GM12878 (cell line): ENCODE measurements at regions of chr17 and their contacts with region 1.

Region 1: DNA sequence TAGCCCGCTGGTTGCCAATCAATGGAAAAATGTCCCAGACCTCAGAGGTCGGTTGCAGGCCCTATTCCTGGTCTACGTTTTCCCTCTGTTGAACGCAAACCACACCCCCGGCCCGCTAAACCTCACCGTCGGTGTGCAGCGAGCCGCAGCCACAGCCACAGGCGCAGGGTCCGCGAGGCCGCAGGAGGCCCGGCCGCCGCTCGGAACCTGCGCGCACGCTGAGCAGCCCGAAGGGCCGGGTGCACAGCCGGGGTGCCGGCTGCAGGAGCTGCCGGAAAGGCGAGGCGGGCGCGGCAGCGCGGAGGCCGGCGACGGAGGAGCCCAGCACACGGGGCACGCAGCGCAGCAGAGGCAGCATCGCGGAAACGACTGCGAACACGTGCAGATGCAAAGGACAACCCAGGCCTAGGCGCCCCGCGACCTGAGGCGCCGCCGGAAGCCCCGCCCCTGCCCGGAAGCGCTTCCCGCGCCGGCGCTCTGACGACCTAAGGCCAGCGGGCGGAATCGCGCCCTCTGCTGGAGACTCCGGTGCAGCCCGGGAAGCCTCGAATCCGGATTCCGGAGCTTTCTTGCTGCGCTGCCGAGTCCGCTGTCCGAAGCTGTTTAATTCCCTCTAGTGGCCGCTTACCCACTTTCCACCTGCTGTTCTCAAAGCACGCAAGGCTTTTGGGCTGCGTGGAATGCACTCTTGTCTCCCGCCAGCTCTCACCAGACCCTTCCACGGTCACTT is at the start of gene C1QBP:
- DNase-seq: peak; percentile 71
- ATAC-seq: peak; percentile 94
- H3K4me3 ChIP-seq: peak within 1 kb of the TSS; percentile 81
- H3K27ac ChIP-seq: peak within 1 kb of the TSS; percentile 82
- H3K4me1 ChIP-seq: peaks cover 9% of the 10 kb centered on the region; the same call in 1 of the 2 replicates
- H3K27me3 ChIP-seq: no peaks in the 10 kb centered on the region
- CTCF ChIP-seq: peak; percentile 93 to 99 (median 99); a peak in 5 of 6 replicates
- EP300 ChIP-seq: no peak
- POLR2A ChIP-seq: peak; percentile 95
- RAD21 ChIP-seq: peak; percentile 66
- polyA plus RNA-seq, gene C1QBP: 124 to 227 TPM

Region 2: DNA sequence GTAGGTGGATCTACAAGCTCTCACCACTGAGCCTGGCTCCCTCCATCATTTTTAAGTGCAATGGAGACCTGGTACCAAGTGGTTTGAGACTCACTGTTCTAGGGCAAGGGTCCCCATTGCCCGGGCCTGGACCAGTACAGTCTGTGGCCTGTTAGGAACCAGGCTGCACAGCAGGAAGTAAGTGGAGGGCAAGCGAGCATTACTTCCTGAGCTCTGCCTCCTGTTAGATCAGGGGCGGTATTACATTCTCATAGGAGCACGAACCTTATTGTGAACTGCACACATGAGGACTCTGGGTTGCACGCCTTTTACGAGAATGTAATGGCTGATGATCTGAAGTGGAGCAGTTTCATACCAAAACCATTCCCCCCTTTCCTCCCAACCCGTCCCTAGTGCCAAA is 240.4 kb before region 1 on chr17:
- CTCF ChIA-PET with region 1: interaction called, 35 read pairs
- POLR2A ChIA-PET with region 1: interaction called, 4 read pairs
- RAD21 ChIA-PET with region 1: interaction called, 3 read pairs
- SMC1A ChIA-PET with region 1: interaction called, 3 read pairs
- in situ Hi-C with region 1: no loop called
- intact Hi-C with region 1: loop called (anchors 5 kb)
- DNase-seq: no peak
- ATAC-seq: peak; percentile 69
- H3K4me3 ChIP-seq: no peak overlapping the region
- H3K27ac ChIP-seq: peak overlapping the region; percentile 89
- H3K4me1 ChIP-seq: peaks cover 31% of the 10 kb centered on the region
- H3K27me3 ChIP-seq: no peaks in the 10 kb centered on the region
- CTCF ChIP-seq: no peak; a peak in 1 of 6 replicates
- EP300 ChIP-seq: no peak
- POLR2A ChIP-seq: peak; percentile 27; the same call in 1 of the 2 replicates
- RAD21 ChIP-seq: no peak

Region 3: GRCh38 chr17:5297245-5297644 is 141.6 kb before region 1 on chr17:
- CTCF ChIA-PET with region 1: interaction called, 6 read pairs
- POLR2A ChIA-PET with region 1: interaction called, 4 read pairs
- RAD21 ChIA-PET with region 1: interaction called, 17 read pairs
- SMC1A ChIA-PET with region 1: no interaction called
- in situ Hi-C with region 1: no loop called
- intact Hi-C with region 1: no loop called
- DNase-seq: no peak
- ATAC-seq: peak; percentile 42
- H3K4me3 ChIP-seq: no peak overlapping the region
- H3K27ac ChIP-seq: no peak overlapping the region
- H3K4me1 ChIP-seq: peaks cover 16% of the 10 kb centered on the region
- H3K27me3 ChIP-seq: no peaks in the 10 kb centered on the region
- CTCF ChIP-seq: peak; percentile 9 to 41 (median 9); a peak in 4 of 6 replicates
- EP300 ChIP-seq: no peak
- POLR2A ChIP-seq: no peak
- RAD21 ChIP-seq: peak; percentile 45

Region 4: DNA sequence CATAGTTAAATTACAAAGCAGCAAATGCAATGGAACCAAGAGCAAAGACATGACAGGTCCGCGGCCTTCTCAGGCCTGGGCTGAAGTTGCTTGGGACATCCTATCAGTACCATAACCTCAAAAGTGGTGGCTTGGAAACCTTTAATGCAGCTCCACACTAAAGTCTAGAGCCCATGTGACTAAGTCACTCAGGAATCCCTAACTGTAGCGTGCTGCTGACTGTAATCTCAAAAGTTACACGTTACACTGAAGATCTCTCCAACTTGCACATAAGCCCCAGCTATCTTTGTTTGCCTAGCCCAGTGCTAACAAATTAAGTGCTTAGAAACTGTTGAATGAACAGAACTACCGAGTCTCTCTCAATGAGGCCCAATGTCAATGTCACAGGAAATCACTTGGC is 47.2 kb before region 1 on chr17:
- CTCF ChIA-PET with region 1: interaction called, 10 read pairs
- POLR2A ChIA-PET with region 1: no interaction called
- RAD21 ChIA-PET with region 1: interaction called, 3 read pairs
- SMC1A ChIA-PET with region 1: interaction called, 12 read pairs
- in situ Hi-C with region 1: no loop called
- intact Hi-C with region 1: no loop called
- DNase-seq: no peak
- ATAC-seq: no peak
- H3K4me3 ChIP-seq: no peak overlapping the region
- H3K27ac ChIP-seq: no peak overlapping the region
- H3K4me1 ChIP-seq: no peaks in the 10 kb centered on the region
- H3K27me3 ChIP-seq: no peaks in the 10 kb centered on the region
- CTCF ChIP-seq: no peak
- EP300 ChIP-seq: no peak
- POLR2A ChIP-seq: no peak
- RAD21 ChIP-seq: no peak

Region 5: DNA sequence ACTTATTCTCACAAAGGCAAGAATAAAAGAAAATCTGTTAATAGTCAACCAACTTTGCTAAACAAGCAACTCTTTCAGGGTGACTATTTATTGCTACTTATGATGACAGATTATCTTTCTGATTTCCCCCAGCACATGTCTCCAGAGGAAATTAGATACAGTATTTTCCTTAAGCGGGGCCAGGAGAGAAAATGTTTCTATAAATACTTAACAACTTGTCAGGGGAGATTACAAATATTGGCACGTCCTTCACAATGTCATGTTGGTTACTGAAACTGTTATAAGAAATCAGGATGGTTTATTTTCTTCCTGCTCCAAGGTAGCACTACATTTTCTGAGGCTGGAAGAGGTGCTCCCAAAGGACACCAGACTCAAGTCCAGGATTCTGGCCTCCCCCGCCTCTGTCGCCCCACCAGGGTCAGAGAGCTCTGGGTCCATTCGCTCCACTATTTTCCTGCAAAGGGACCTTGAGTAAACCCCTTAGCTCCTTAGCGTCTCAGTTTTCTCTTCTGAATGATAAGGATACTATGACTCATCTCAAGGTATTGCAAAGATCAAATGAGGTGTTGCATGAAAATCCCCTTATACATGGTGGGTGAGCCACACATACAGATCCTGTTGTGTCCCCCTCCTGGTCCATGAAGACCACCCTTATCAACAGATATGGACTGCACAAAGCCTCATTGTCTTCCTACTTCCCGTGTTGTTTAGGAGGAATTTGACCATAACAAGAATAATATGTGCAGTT is 426.2 kb after region 1 on chr17:
- CTCF ChIA-PET with region 1: no interaction called
- POLR2A ChIA-PET with region 1: no interaction called
- RAD21 ChIA-PET with region 1: no interaction called
- SMC1A ChIA-PET with region 1: no interaction called
- in situ Hi-C with region 1: no loop called
- intact Hi-C with region 1: no loop called
- DNase-seq: no peak
- ATAC-seq: no peak
- H3K4me3 ChIP-seq: no peak overlapping the region
- H3K27ac ChIP-seq: no peak overlapping the region
- H3K4me1 ChIP-seq: no peaks in the 10 kb centered on the region
- H3K27me3 ChIP-seq: no peaks in the 10 kb centered on the region
- CTCF ChIP-seq: no peak
- EP300 ChIP-seq: no peak
- POLR2A ChIP-seq: no peak
- RAD21 ChIP-seq: no peak